ENCODE measurements at regions of chr20 and their contacts with region 1.

Region 1: DNA sequence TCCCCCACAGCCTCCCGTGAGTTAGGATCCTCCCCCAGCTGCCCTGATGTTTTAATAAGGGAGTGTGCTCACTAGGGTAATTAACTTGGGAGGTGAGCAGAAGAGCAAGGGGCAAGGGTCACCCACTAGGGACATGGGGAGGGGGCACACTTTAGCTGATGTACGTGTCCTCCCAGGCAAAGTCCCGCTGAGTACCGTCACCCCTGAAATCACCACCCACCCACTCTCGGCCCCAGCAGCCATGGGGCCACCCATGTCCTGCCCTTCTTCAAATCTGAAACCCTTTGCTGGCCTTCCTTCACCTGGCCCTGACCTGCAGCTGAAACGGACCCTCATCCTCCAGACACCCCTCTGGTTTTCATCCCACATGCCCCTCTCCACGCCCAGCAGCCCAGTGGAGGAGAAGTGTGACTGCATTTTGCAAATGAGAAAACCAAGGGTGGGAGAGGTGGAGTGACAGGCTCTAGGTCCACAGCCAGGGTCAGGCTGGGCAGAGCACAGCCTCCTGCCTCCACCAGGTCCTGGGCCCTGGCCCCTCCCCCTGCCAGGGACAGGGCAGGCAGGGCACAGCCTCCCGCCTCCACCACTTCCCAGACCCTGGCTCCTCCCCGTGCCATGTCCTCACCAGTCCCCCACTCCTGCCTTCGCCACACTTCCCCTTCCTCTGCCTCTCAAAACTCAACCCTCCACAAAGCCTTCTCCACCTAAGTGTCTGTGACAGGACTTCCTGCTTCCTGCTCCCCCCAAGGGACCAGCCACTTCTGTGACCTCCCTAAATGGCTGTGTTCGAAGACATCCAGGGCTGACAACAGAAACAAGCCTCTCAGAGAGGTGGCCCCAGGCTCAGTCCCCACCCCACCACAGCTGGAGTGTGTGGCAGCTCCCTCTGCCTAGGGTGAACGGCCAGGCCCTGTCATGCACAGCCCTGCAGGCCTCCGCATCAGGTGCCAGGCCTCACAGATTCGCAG is 15.1 kb downstream of the ACSS1 start:
- DNase-seq: peak; percentile 85
- H3K4me3 ChIP-seq: no peak overlapping the region
- H3K27ac ChIP-seq: peak overlapping the region; percentile 52 to 93 (median 88)
- H3K4me1 ChIP-seq: peaks cover 0 to 79% (median 62%) of the 10 kb centered on the region in 4 donors
- H3K27me3 ChIP-seq: no peaks in the 10 kb centered on the region
- CTCF ChIP-seq: no peak
- EP300 ChIP-seq: no peak
- POLR2A ChIP-seq: no peak

Region 2: DNA sequence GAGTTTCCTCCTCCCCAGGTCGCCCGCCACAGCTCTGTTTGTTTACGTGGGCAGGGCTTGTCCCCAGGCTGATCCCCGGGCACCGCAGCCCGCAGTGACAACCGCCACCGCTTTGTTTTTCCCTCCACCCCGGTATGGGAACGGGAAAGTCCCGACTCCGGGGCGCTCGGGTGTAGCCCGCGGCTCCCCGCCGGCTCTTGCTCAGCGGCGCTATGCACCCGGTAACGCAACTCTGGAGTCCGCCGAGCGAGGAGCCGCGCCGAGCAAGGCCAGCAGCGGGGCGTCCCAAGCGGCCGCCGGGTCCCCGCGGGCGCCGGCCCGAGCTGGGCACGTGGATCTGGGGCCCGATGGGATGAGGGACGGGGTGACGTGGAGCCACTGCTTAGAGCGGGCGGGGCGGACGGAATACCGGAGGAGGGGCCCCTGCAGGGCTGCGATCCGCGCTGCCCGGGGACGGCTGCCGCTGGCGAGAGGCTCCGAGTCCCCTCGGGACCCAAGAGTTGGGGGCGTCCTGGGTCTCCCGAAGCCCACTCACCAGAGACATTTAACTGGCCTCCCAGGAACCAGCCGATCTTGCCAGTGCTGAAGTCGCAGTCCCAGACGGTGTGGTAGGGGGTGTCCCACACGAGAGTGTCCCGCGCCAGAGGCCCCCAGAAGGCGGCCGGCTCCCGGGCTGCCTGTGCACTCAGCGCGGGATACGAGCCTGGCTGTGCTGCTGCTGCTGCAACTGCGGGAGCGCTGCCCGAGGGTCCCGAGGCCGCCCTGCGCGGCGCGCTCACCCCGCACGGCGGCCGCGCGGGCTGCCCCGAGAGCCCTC is 14.6 kb after region 1 on chr20:
- intact Hi-C with region 1: loop called (anchors 2 kb)
- DNase-seq: peak; percentile 90
- H3K4me3 ChIP-seq: peak overlapping the region; percentile 75 to 88 (median 80)
- H3K27ac ChIP-seq: peak overlapping the region; percentile 93 to 97 (median 94)
- H3K4me1 ChIP-seq: peaks cover 2 to 62% (median 58%) of the 10 kb centered on the region in 4 donors
- H3K27me3 ChIP-seq: no peaks in the 10 kb centered on the region
- CTCF ChIP-seq: no peak
- EP300 ChIP-seq: no peak
- POLR2A ChIP-seq: peak; percentile 36 to 47

Measured in sigmoid colon (tissue), 7 donors.